ENCODE measurements at regions of chr10 and their contacts with region 1.

Region 1: DNA sequence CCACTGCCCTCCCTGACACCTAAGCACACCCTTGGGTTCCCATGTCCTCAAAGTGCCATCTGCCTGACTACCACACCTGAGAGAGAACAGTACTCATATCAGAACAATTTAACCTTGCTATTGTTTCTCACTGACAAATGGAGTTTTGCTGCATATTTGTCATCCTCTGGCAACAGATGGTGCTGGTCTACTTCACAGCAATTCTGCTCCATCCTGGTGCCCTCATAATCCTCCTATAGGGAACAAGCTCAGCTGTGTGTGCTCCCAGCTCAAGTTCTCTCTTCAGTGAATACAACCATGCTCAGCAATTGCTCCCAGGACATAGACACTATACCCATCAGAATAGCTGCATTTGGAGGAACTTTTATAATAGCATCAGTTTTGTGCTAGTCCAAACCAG is 32.8 kb upstream of the ITGB1 start:
- DNase-seq: no peak
- ATAC-seq: no peak
- H3K4me3 ChIP-seq: no peak overlapping the region
- H3K4me3 Mint-ChIP-seq: no peak overlapping the region
- H3K27ac ChIP-seq: no peak overlapping the region
- H3K27ac Mint-ChIP-seq: peak overlapping the region in 1 of 2 donors; percentile 31
- H3K4me1 ChIP-seq: peaks cover 8% of the 10 kb centered on the region
- H3K4me1 Mint-ChIP-seq: peaks cover 15 to 18% of the 10 kb centered on the region in 2 donors
- H3K27me3 ChIP-seq: no peaks in the 10 kb centered on the region
- H3K27me3 Mint-ChIP-seq: no peaks in the 10 kb centered on the region
- CTCF ChIP-seq: no peak

Region 2: DNA sequence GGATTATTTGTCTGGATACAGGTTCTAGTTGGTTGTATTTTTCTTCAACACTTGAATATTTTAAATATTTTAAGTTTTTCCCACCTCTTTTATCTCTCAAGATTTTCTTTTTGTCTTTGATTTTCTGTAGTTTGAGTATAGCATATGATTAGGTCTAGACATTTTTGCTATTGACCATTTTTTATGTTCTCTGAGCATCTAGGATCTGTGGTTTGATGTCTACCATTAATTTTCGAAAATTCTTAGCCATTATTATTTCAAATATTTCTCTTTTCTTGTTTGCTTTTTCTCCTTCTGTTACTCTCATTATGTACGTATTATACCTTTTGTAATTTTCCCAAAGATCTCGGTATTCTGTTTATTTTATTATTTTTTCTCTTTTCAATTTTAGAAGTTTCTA is 251.9 kb before region 1 on chr10:
- intact Hi-C with region 1: no loop called
- DNase-seq: no peak
- ATAC-seq: no peak
- H3K4me3 ChIP-seq: no peak overlapping the region
- H3K4me3 Mint-ChIP-seq: no peak overlapping the region
- H3K27ac ChIP-seq: no peak overlapping the region
- H3K27ac Mint-ChIP-seq: no peak overlapping the region
- H3K4me1 ChIP-seq: no peaks in the 10 kb centered on the region
- H3K4me1 Mint-ChIP-seq: no peaks in the 10 kb centered on the region
- H3K27me3 ChIP-seq: no peaks in the 10 kb centered on the region
- H3K27me3 Mint-ChIP-seq: no peaks in the 10 kb centered on the region
- CTCF ChIP-seq: no peak

Region 3: DNA sequence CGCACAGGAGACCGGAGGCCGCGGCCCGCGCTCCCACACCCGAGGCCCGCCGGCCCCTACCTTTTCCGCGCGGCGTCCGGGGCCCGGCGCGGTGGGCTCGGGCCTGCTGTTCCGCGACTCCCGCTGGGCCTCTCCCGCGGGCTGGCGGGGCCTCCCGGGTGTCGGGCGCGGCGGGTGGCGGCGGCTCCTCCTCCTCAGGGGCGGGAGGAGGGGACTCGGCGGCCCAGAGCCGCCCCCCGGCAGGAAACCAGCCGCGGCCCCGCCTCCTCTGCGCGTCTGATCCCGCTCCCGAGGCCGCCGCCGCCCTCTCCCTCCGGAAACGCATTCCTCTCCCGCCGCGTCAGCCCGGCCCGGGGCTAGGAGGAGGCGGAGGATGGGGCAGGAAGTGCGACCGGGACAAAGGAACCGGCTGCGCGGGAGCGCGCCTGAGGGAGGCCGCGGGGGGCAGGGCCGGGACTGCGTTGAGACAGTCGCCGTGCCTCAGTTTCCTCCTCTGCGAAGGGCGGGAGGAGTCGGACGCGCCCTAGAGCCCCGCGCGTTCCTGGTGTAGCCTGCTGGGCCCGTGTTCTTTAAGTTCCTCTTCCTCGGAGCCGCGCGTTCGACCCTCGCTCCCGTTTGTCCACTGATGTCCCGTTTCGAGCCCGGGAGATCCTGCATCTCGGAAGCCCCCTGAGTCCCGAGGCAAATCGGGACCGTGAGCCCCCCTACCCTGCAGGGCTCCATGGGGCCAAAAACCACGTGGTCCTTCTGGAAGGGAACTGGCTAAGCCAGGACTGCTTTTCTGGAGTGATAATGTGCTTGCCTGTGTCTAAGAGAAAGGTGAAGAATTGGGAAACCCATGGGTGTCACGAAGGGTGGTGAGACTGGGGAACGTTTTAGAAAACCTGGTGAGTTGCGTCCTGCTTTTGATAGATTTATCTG is 32.5 kb before region 1 on chr10 and contains the start of gene ITGB1:
- intact Hi-C with region 1: loop called (anchors 5 kb)
- DNase-seq: peak; percentile 85 to 90
- ATAC-seq: peak; percentile 88 to 95 (median 93)
- H3K4me3 ChIP-seq: peak within 1 kb of the TSS; percentile 64
- H3K4me3 Mint-ChIP-seq: peak within 1 kb of the TSS; percentile 94
- H3K27ac ChIP-seq: peak within 1 kb of the TSS; percentile 63
- H3K27ac Mint-ChIP-seq: peak within 1 kb of the TSS; percentile 86 to 94
- H3K4me1 ChIP-seq: peaks cover 27% of the 10 kb centered on the region
- H3K4me1 Mint-ChIP-seq: peaks cover 44 to 47% of the 10 kb centered on the region in 2 donors
- H3K27me3 ChIP-seq: no peaks in the 10 kb centered on the region
- H3K27me3 Mint-ChIP-seq: no peaks in the 10 kb centered on the region
- CTCF ChIP-seq: no peak
- total RNA-seq, gene ITGB1: 175 to 280 (median 202) TPM

Region 4: GRCh38 chr10:33005322-33006301 is 14.8 kb after region 1 on chr10:
- intact Hi-C with region 1: no loop called
- DNase-seq: peak; percentile 45 to 61
- ATAC-seq: peak; percentile 70 to 81 (median 77)
- H3K4me3 ChIP-seq: peak overlapping the region; percentile 50
- H3K4me3 Mint-ChIP-seq: peak overlapping the region; percentile 86
- H3K27ac ChIP-seq: peak overlapping the region; percentile 21
- H3K27ac Mint-ChIP-seq: peak overlapping the region; percentile 68 to 86
- H3K4me1 ChIP-seq: peaks cover 29% of the 10 kb centered on the region
- H3K4me1 Mint-ChIP-seq: peaks cover 37 to 41% of the 10 kb centered on the region in 2 donors
- H3K27me3 ChIP-seq: no peaks in the 10 kb centered on the region
- H3K27me3 Mint-ChIP-seq: no peaks in the 10 kb centered on the region
- CTCF ChIP-seq: no peak